ENCODE measurements at regions of chr10 and their contacts with region 1.

Region 1: DNA sequence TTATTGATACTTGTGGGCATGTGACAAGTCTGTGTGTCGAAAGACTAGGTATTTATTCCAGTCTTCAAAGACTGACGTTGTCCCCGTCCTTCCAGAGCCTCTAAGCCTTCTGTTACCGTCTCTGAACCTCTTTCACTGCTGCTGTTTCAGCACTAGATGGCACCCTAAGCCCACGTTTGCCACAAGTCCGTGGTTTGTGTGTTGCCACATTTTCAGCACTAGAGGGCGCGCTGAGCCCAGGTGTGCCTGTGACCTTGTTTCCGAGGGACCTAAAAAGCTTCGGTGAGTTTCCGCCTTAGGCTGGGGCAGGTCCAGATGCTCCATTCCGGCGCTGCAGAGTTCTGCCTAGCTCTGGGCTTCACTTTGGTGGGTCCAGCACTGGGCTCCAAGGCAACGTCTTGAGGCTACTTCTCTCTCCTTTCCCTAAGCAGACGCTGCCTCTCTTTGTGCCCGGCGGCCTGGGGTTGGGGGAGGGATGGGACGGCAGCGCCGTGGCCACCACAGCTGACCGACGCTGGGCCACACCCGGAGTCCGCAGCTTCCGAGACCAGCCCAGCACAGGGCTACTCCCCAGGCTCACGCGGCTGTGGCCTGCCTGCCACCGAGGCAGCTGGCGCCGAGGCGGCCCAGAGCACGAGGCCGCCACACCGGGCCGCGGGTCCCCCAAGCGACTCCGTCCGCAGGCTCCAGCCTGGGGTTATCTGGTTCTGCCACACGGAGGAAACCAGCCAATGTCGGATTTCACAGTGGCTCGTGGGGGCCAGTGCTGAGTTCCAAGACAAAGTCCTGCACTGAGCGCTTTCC is 520.2 kb downstream of the REEP3 start:
- DNase-seq: peak; percentile 91
- ATAC-seq: peak; percentile 97
- H3K4me3 Mint-ChIP-seq: peak overlapping the region; percentile 41
- H3K27ac Mint-ChIP-seq: peak overlapping the region; percentile 39
- H3K4me1 Mint-ChIP-seq: peaks cover 5% of the 10 kb centered on the region
- H3K27me3 Mint-ChIP-seq: peaks cover 7% of the 10 kb centered on the region

Region 2: DNA sequence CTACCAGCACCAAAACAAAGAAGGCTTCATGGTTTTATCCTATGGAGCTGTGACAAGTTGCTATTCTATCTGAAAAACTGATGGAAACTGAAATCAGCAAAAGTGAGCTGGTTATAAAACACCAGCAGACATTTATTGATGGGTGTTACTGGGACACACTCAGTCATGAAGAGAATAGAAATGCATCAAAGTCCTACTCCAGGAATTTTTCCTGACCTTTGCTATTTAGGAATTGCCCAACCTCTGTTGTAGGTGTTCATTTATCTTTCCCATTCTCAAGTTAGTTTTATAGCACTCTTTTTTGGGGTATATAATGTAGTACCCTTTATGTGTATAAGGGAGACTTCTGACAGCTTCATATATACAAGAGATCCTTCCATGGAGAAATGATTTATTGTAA is 13.0 kb after region 1 on chr10:
- CTCF ChIA-PET with region 1: interaction called, 10 read pairs
- POLR2A ChIA-PET with region 1: no interaction called
- intact Hi-C with region 1: no loop called
- DNase-seq: no peak
- ATAC-seq: no peak
- H3K4me3 Mint-ChIP-seq: no peak overlapping the region
- H3K27ac Mint-ChIP-seq: no peak overlapping the region
- H3K4me1 Mint-ChIP-seq: no peaks in the 10 kb centered on the region
- H3K27me3 Mint-ChIP-seq: peaks cover 5% of the 10 kb centered on the region

Region 3: GRCh38 chr10:64115913-64116643 is 74.7 kb after region 1 on chr10:
- CTCF ChIA-PET with region 1: no interaction called
- POLR2A ChIA-PET with region 1: no interaction called
- intact Hi-C with region 1: loop called in 1 of 2 experiments (anchors 1 kb)
- DNase-seq: peak; percentile 11
- ATAC-seq: no peak
- H3K4me3 Mint-ChIP-seq: no peak overlapping the region
- H3K27ac Mint-ChIP-seq: no peak overlapping the region
- H3K4me1 Mint-ChIP-seq: peaks cover 5% of the 10 kb centered on the region
- H3K27me3 Mint-ChIP-seq: peaks cover 3% of the 10 kb centered on the region

Measured in activated CD4-positive, alpha-beta T cell treated with anti-CD3 and anti-CD28 coated beads for 36 hours (primary cell).